ENCODE measurements at regions of chr1 and their contacts with region 1.

Region 1: GRCh38 chr1:32063261-32063681 is 9.5 kb upstream of the TMEM39B start:
- DNase-seq: peak in 4 of 5 donors; percentile 16 to 41 (median 36)
- H3K4me3 ChIP-seq: no peak overlapping the region
- H3K4me3 Mint-ChIP-seq: no peak overlapping the region
- H3K27ac ChIP-seq: no peak overlapping the region
- H3K27ac Mint-ChIP-seq: peak overlapping the region in 6 of 7 donors; percentile 25 to 85 (median 70)
- H3K4me1 ChIP-seq: peaks cover 13% of the 10 kb centered on the region
- H3K4me1 Mint-ChIP-seq: peaks cover 8 to 23% (median 13%) of the 10 kb centered on the region in 4 donors
- H3K27me3 ChIP-seq: no peaks in the 10 kb centered on the region
- H3K27me3 Mint-ChIP-seq: no peaks in the 10 kb centered on the region

Region 2: GRCh38 chr1:31182352-31182751 is 880.9 kb before region 1 on chr1:
- CTCF ChIA-PET with region 1: no interaction called
- POLR2A ChIA-PET with region 1: no interaction called
- intact Hi-C with region 1: no loop called
- DNase-seq: peak in 4 of 5 donors; percentile 22 to 34 (median 28)
- H3K4me3 ChIP-seq: no peak overlapping the region
- H3K4me3 Mint-ChIP-seq: no peak overlapping the region
- H3K27ac ChIP-seq: no peak overlapping the region
- H3K27ac Mint-ChIP-seq: no peak overlapping the region
- H3K4me1 ChIP-seq: no peaks in the 10 kb centered on the region
- H3K4me1 Mint-ChIP-seq: peaks cover 2 to 13% (median 7%) of the 10 kb centered on the region in 4 donors
- H3K27me3 ChIP-seq: peaks cover 14% of the 10 kb centered on the region
- H3K27me3 Mint-ChIP-seq: peaks cover 26 to 38% of the 10 kb centered on the region in 2 donors

Region 3: DNA sequence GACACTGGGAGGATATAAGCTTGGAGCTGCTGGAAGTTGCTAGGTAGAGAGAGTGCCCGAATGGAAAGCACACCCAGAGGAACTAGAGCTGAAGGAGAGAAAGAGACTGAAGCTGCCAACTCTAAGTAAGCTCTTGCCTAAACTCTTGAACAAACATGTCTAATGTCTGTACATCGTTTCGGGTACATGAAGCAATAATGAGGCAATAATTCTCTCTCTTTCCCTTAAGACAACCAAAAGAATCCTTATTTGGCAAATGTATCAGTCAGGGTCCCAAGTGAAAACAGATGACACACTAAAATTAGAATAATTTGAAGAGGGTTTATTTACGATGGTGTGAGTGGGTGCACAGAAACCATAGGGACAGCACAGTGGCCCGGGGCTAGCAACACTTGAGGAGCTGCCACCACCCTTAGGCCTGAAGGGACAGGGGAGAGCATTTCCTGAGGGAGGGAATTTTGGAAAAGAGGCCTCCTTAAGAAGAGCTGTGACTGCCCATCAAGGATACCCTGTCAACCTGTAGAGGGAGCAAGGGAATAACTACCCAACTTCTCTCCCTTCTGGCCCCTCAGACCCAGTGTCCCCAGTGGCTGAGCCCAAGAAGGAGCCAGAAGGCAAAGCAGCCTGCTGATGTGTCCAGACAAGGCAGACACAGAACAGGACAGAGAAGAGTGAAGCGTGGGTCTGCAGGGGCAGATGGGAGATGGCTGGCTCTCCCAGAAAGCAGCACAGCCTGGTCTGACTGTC is 85.7 kb before region 1 on chr1:
- CTCF ChIA-PET with region 1: interaction called, 5 read pairs
- POLR2A ChIA-PET with region 1: no interaction called
- intact Hi-C with region 1: loop called (anchors 5 kb)
- DNase-seq: no peak
- H3K4me3 ChIP-seq: no peak overlapping the region
- H3K4me3 Mint-ChIP-seq: no peak overlapping the region
- H3K27ac ChIP-seq: no peak overlapping the region
- H3K27ac Mint-ChIP-seq: peak overlapping the region in 4 of 7 donors; percentile 43 to 68 (median 51)
- H3K4me1 ChIP-seq: peaks cover 20% of the 10 kb centered on the region
- H3K4me1 Mint-ChIP-seq: peaks cover 18 to 26% (median 20%) of the 10 kb centered on the region in 4 donors
- H3K27me3 ChIP-seq: no peaks in the 10 kb centered on the region
- H3K27me3 Mint-ChIP-seq: no peaks in the 10 kb centered on the region

Region 4: GRCh38 chr1:32052887-32053286 is 10.4 kb before region 1 on chr1:
- CTCF ChIA-PET with region 1: interaction called, 17 read pairs
- POLR2A ChIA-PET with region 1: interaction called, 5 read pairs
- intact Hi-C with region 1: no loop called
- DNase-seq: no peak
- H3K4me3 ChIP-seq: no peak overlapping the region
- H3K4me3 Mint-ChIP-seq: no peak overlapping the region
- H3K27ac ChIP-seq: no peak overlapping the region
- H3K27ac Mint-ChIP-seq: peak overlapping the region in 1 of 7 donors; percentile 56
- H3K4me1 ChIP-seq: no peaks in the 10 kb centered on the region
- H3K4me1 Mint-ChIP-seq: no peaks in the 10 kb centered on the region
- H3K27me3 ChIP-seq: no peaks in the 10 kb centered on the region
- H3K27me3 Mint-ChIP-seq: no peaks in the 10 kb centered on the region